ENCODE measurements at regions of chr2 and their contacts with region 1.

Region 1: DNA sequence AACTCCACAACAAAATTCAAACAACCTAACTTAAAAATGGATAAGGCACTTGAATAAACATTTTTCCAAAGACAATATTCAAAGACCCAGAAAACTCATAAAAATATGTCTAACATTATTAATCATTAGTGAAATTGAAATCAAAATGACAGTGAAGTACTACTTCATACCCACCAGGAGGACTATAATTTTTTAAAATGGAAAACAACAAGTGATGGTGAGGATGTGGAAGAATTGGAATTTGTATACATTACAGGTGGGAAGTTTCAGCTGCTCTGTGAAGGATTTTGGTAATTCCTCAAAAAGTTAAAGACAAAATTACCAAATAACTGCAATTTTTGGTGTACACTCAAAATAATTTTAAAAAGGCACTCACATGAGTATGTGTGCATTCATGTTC is 920.0 kb downstream of the TDRD15 start:
- DNase-seq: no peak
- H3K4me3 Mint-ChIP-seq: no peak overlapping the region
- H3K27ac Mint-ChIP-seq: no peak overlapping the region
- H3K4me1 Mint-ChIP-seq: no peaks in the 10 kb centered on the region
- H3K27me3 Mint-ChIP-seq: no peaks in the 10 kb centered on the region
- CTCF ChIP-seq: no peak

Region 2: GRCh38 chr2:21972586-21972985 is 71.2 kb before region 1 on chr2:
- CTCF ChIA-PET with region 1: no interaction called
- intact Hi-C with region 1: no loop called
- DNase-seq: no peak
- H3K4me3 Mint-ChIP-seq: no peak overlapping the region
- H3K27ac Mint-ChIP-seq: no peak overlapping the region
- H3K4me1 Mint-ChIP-seq: no peaks in the 10 kb centered on the region
- H3K27me3 Mint-ChIP-seq: no peaks in the 10 kb centered on the region
- CTCF ChIP-seq: no peak

Region 3: DNA sequence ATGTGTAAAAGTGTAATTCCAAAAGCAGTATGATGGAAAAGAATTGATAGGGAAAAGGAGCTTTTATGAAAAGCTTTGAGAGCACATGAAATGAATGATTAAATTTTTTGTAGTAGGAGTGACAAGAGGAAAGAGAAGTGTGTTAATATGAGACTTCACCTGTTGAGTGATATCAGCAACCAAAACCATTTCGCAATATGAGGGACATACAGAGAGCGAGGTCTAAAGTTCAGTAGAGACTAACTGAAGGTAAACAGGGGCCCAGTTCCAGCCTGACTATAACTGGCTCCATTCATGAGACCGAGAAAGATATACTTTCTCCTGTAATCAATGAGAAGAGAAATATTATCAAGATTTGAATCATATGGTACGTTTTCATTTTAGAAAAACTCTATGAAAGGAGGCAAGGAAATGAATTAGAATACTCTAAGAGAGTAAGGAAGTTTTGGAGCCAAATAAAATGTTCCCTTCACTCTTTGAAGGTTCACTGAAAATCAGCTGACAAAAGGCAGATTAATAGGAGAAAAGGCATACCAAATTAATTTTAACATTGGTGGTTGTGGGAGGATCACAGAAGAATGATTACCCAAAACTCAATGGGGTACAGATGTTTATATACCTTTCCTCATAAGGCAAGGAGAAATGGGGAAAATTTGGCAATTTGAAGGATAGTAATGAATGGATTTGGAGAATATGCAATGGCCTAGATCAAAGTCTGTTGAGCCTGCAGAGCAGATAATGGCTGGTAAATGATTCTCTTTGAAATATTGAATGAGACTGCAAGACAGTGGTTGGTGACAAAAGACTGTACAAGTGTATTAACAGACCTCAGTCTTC is 12.2 kb after region 1 on chr2:
- CTCF ChIA-PET with region 1: no interaction called
- intact Hi-C with region 1: loop called (anchors 1 kb)
- DNase-seq: peak; percentile 12
- H3K4me3 Mint-ChIP-seq: no peak overlapping the region
- H3K27ac Mint-ChIP-seq: no peak overlapping the region
- H3K4me1 Mint-ChIP-seq: no peaks in the 10 kb centered on the region
- H3K27me3 Mint-ChIP-seq: no peaks in the 10 kb centered on the region
- CTCF ChIP-seq: no peak

Region 4: DNA sequence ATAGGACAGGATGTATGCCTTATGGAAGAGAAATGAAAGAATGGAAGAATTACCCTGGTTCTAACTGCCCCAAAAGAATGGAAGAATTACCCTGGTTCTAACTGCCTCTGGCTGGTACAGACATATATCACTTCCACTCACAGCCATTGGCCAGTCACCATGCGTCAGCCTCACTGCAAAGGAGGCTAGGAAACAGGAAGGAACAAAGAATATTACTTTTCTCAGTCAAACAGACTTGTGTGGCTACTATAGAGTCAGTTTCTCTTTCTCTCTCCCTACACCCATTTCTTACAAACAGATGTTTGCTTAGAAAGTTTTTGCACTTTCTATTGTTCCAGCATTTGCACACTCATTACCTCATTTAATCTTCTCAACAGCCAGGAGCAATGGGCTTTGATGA is 230.1 kb after region 1 on chr2:
- CTCF ChIA-PET with region 1: no interaction called
- intact Hi-C with region 1: no loop called
- DNase-seq: no peak
- H3K4me3 Mint-ChIP-seq: no peak overlapping the region
- H3K27ac Mint-ChIP-seq: no peak overlapping the region
- H3K4me1 Mint-ChIP-seq: no peaks in the 10 kb centered on the region
- H3K27me3 Mint-ChIP-seq: no peaks in the 10 kb centered on the region
- CTCF ChIP-seq: no peak